Ascending aorta (tissue), 2 donors: ENCODE measurements at regions of chr15 and their contacts with region 1.

Region 1: GRCh38 chr15:76931397-76932007 is at the start of gene RCN2:
- DNase-seq: peak; percentile 68 to 97
- H3K4me3 ChIP-seq: peak within 1 kb of the TSS; percentile 69 to 97
- H3K27ac ChIP-seq: peak within 1 kb of the TSS; percentile 73 to 78
- H3K4me1 ChIP-seq: no peaks in the 10 kb centered on the region
- H3K27me3 ChIP-seq: no peaks in the 10 kb centered on the region
- CTCF ChIP-seq: no peak
- total RNA-seq, gene RCN2: 65.5 TPM

Region 2: DNA sequence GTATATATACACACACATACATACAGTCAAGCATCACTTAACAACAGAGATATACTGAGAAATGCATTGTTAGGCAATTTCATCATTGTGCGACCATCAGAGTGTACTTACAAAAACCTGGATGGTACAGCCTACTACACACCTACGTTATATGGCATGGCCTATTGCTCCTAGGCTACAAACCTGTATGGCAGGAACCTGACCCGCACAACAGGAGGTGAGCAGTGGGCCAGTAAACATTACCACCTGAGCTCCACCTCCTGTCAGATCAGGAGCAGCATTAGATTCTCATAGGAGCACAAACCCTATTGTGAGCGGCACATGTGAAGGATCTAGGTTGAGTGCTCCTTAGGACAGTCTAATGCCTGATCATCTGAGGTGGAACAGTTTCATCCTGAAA is 116.1 kb before region 1 on chr15:
- intact Hi-C with region 1: no loop called
- DNase-seq: no peak
- H3K4me3 ChIP-seq: no peak overlapping the region
- H3K27ac ChIP-seq: no peak overlapping the region
- H3K4me1 ChIP-seq: no peaks in the 10 kb centered on the region
- H3K27me3 ChIP-seq: no peaks in the 10 kb centered on the region
- CTCF ChIP-seq: no peak

Region 3: GRCh38 chr15:76905013-76905839 is 26.3 kb before region 1 on chr15 and contains the start of gene SCAPER:
- intact Hi-C with region 1: loop called (anchors 1 kb)
- DNase-seq: peak; percentile 80 to 94
- H3K4me3 ChIP-seq: peak within 1 kb of the TSS; percentile 91 to 97
- H3K27ac ChIP-seq: peak within 1 kb of the TSS; percentile 93 to 94
- H3K4me1 ChIP-seq: peaks cover 0 to 14% of the 10 kb centered on the region in 2 donors
- H3K27me3 ChIP-seq: no peaks in the 10 kb centered on the region
- CTCF ChIP-seq: peak in 1 of 3 experiments; percentile 7
- total RNA-seq, gene SCAPER: 78.1 TPM

Region 4: GRCh38 chr15:76973362-76973743 is 41.9 kb after region 1 on chr15:
- intact Hi-C with region 1: no loop called
- DNase-seq: no peak
- H3K4me3 ChIP-seq: peak overlapping the region; percentile 42 to 49
- H3K27ac ChIP-seq: peak overlapping the region; percentile 85 to 86
- H3K4me1 ChIP-seq: peaks cover 4 to 14% of the 10 kb centered on the region in 2 donors
- H3K27me3 ChIP-seq: no peaks in the 10 kb centered on the region
- CTCF ChIP-seq: peak; percentile 65 to 80 (median 78)

Region 5: DNA sequence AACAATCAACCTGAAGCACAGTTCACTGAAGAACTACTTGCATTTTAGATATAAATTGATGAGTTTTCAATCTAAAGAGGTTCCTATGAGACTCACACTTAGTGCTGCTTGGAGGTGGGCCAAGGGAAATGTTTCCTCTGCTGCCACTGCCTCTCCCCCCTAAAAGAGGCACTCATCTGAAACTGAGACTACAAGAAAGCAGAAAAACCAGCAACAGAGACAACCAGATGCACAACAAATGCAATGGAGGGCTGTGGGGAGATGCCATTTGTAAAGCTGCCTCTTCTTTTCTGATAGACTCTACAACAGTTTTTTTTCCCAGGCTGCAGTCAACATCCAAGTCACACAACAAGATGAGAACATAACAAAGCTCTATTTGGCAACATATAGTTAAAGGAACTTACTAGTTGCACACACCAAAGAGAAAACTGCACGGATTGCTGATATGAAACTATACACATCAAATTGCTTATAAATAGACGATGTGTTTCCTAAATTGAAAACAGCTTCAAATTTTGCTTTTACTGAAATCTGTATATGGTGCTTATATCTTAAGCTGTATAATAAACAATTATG is 128.4 kb after region 1 on chr15:
- intact Hi-C with region 1: no loop called
- DNase-seq: no peak
- H3K4me3 ChIP-seq: no peak overlapping the region
- H3K27ac ChIP-seq: no peak overlapping the region
- H3K4me1 ChIP-seq: peaks cover 5 to 27% of the 10 kb centered on the region in 2 donors
- H3K27me3 ChIP-seq: no peaks in the 10 kb centered on the region
- CTCF ChIP-seq: no peak

Region 6: DNA sequence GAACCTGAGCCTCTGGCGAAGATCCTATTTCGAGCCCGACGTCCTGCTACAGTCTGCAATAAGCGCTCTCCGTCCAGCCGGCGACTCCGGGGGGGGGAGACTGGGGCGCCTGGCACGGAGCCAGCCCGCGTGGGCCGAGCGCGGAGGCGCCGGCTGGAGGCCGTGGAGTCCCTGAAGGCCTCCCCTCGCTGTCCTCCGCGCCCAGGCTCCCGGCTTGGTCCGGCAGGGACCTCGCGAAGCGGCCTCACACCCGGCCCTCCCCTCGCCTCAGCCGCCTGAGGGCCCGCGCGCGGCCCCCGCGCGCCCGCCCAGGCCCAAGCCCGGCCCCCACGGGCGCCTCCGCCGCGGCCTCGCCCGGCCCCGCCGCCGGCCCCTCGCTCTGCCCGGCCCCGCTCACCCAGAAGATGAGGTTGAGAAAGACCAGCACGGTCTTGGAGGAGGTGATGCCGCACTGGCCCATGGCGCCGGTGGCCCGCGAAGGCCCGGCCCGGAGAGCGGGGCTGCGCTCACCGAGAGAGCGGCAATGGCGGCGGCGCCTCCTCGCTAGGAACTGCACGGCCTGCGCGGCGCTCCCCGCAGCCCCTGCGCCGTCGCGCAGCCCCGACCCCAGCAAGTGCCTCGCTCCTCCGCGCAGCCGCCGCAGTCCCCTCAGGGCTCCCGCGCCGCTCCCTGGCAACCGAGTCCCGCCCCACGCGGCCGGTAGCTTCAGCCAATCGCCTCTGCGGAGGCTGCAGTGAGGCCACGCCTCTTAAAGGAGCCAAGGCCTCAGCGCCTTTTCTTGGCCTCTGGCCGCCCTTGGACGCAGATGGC is 139.2 kb after region 1 on chr15 and contains the start of gene TSPAN3:
- intact Hi-C with region 1: loop called (anchors 1 kb)
- DNase-seq: peak; percentile 65 to 96
- H3K4me3 ChIP-seq: peak within 1 kb of the TSS; percentile 88 to 93
- H3K27ac ChIP-seq: peak within 1 kb of the TSS; percentile 87 to 95
- H3K4me1 ChIP-seq: peaks cover 3 to 17% of the 10 kb centered on the region in 2 donors
- H3K27me3 ChIP-seq: no peaks in the 10 kb centered on the region
- CTCF ChIP-seq: no peak
- total RNA-seq, gene TSPAN3: 98.2 TPM

Region 7: DNA sequence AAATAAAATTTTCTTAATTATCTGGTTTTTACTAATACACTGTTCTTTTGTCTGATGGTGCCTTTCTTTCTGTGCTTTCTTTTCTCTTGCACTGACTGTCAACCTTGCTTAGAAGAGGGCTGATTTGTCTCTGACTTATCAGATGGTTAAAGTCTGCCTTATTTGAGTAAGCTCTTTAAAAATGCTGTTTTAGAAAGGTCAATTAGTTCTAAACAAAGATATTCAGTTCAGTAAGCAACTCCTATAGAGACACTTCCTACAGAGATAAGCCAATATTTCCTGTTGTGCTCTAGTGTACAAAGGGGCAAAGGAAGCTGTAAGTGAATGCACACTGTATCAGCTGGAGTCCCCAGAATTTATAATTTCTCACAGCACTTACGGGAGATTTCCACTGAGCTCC is 292.9 kb after region 1 on chr15:
- intact Hi-C with region 1: no loop called
- DNase-seq: no peak
- H3K4me3 ChIP-seq: no peak overlapping the region
- H3K27ac ChIP-seq: no peak overlapping the region
- H3K4me1 ChIP-seq: no peaks in the 10 kb centered on the region
- H3K27me3 ChIP-seq: no peaks in the 10 kb centered on the region
- CTCF ChIP-seq: no peak

Region 8: GRCh38 chr15:77419836-77420609 is 488.5 kb after region 1 on chr15 and contains the start of gene PEAK1:
- intact Hi-C with region 1: loop called (anchors 10 kb)
- DNase-seq: peak; percentile 99 to 100
- H3K4me3 ChIP-seq: peak within 1 kb of the TSS; percentile 76 to 99
- H3K27ac ChIP-seq: peak within 1 kb of the TSS; percentile 91 to 97
- H3K4me1 ChIP-seq: peaks cover 0 to 20% of the 10 kb centered on the region in 2 donors
- H3K27me3 ChIP-seq: no peaks in the 10 kb centered on the region
- CTCF ChIP-seq: no peak
- total RNA-seq, gene PEAK1: 53.7 TPM